Mammary epithelial cell (primary cell): ENCODE measurements at regions of chr3 and their contacts with region 1.

Region 1: GRCh38 chr3:33505027-33505426 is 64.8 kb upstream of the UBP1 start:
- DNase-seq: no peak
- H3K4me3 ChIP-seq: no peak overlapping the region
- H3K27ac ChIP-seq: no peak overlapping the region
- H3K4me1 ChIP-seq: no peaks in the 10 kb centered on the region
- H3K27me3 ChIP-seq: no peaks in the 10 kb centered on the region
- CTCF ChIP-seq: no peak

Region 2: DNA sequence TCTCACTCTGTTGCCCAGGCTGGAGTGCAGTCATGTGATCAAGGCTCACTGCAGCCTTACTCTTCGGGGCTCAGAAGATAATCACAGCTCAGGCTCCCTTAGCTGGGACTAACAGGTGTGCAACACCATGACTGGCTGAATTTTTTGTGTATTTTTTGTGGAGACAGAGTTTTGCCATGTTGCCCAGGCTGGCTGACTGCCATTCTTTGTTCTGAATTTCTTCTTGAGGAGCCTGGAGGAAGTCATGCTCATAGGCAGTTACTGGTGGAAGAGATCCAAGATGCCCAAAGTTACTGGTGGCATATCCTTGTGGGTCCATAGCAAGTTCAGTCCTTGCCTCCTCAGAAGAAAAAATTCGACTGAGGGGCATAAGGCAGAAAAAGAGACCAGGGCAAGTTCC is 48.3 kb before region 1 on chr3:
- CTCF ChIA-PET with region 1: no interaction called
- dilution Hi-C with region 1: loop called (anchors 10 kb)
- in situ Hi-C with region 1: no loop called
- intact Hi-C with region 1: no loop called
- DNase-seq: no peak
- H3K4me3 ChIP-seq: no peak overlapping the region
- H3K27ac ChIP-seq: no peak overlapping the region
- H3K4me1 ChIP-seq: no peaks in the 10 kb centered on the region
- H3K27me3 ChIP-seq: no peaks in the 10 kb centered on the region
- CTCF ChIP-seq: no peak